Activated CD8-positive, alpha-beta T cell treated with anti-CD3 and anti-CD28 coated beads, Interleukin-2, amount 10 ng/mL, durations not matched to agents 7 days and 5 days (primary cell): ENCODE measurements at regions of chr2 and their contacts with region 1.

Region 1: GRCh38 chr2:231227309-231228162 is 29.1 kb downstream of the ARMC9 start:
- DNase-seq: peak; percentile 68
- ATAC-seq: peak; percentile 93
- H3K4me3 Mint-ChIP-seq: no peak overlapping the region
- H3K27ac Mint-ChIP-seq: no peak overlapping the region
- H3K4me1 Mint-ChIP-seq: no peaks in the 10 kb centered on the region
- H3K27me3 Mint-ChIP-seq: no peaks in the 10 kb centered on the region

Region 2: DNA sequence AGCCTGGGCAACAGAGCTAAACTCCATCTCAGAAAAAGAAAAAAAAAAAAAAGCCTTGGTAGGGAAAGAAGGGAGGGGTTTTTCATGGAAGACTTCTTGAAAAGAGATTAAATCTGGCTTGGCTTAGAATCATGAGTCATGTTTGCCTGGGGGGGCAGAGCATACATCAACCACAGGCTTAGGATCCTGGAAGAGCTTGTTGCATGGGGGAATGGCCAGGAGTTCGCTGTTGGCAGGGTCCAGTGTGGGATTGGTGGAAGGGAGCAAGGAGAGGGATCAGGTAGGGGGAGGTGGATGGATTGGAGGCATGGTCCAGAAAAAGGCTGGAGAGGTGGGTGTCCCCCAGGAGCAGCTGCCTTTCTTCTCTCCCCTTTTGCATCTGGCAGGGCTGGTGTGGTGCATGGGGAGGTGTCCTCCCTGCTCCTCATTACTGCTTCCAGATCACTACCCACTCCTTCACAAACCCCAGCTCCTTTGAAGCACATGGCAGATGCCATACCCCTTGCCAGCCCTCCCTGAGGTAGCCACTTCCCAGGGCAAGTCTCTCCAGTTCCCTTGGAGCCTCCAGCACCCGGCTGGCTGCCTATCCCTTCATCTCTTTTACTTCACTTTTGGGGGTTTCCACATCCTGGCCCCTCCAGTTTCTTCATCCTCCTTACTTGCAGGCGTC is 26.6 kb before region 1 on chr2:
- CTCF ChIA-PET with region 1: no interaction called
- POLR2A ChIA-PET with region 1: no interaction called
- DNase-seq: no peak
- ATAC-seq: no peak
- H3K4me3 Mint-ChIP-seq: no peak overlapping the region
- H3K27ac Mint-ChIP-seq: no peak overlapping the region
- H3K4me1 Mint-ChIP-seq: peaks cover 14% of the 10 kb centered on the region
- H3K27me3 Mint-ChIP-seq: peaks cover 20% of the 10 kb centered on the region

Region 3: DNA sequence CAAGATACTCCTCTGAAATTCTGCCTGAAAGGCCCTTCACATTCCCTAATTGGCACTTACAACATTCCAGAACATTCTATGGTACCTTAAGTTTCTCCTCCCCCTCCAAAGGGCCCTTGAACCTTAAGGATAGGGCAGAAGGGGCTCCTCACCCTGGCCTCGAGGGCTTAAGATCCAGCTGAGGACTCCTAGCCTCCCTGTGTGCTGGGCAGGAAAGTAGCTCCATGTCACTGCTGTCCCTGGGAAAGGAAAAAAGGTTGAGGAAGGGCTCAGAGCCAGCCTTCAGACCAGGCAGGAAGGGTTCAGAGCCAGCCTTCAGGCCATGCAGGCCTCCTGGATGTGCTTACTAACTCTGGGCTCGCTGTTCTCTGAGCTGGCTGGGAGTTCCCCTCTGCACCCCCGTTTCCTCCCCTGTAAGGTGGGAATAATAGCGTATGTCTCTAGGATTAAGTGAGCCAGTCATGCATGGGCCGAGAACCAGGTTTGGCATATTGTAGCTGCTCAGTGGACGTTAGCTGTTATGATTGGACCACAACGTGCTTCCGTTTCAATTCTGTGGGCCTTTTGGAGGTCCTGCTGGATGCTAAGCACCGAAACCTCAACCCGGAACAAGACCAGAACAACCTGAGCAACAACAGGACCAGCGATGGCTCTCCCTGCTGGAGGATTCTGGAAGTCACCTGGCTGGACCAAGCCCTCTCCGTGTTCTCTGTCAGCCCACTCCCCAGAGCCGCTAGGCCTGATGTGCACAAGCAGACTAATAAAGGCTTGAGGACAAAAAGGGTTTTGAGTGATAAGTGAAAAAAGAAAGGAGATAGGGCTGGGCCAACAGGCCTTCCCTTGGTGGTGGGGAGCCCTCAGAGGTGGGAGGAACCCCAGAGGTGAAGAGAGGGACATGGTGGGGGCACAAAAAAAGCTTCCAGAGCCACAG is 166.9 kb after region 1 on chr2:
- CTCF ChIA-PET with region 1: interaction called, 19 read pairs
- POLR2A ChIA-PET with region 1: no interaction called
- DNase-seq: no peak
- ATAC-seq: no peak
- H3K4me3 Mint-ChIP-seq: peak overlapping the region; percentile 48
- H3K27ac Mint-ChIP-seq: peak overlapping the region; percentile 95
- H3K4me1 Mint-ChIP-seq: peaks cover 38% of the 10 kb centered on the region
- H3K27me3 Mint-ChIP-seq: peaks cover 16% of the 10 kb centered on the region

Region 4: DNA sequence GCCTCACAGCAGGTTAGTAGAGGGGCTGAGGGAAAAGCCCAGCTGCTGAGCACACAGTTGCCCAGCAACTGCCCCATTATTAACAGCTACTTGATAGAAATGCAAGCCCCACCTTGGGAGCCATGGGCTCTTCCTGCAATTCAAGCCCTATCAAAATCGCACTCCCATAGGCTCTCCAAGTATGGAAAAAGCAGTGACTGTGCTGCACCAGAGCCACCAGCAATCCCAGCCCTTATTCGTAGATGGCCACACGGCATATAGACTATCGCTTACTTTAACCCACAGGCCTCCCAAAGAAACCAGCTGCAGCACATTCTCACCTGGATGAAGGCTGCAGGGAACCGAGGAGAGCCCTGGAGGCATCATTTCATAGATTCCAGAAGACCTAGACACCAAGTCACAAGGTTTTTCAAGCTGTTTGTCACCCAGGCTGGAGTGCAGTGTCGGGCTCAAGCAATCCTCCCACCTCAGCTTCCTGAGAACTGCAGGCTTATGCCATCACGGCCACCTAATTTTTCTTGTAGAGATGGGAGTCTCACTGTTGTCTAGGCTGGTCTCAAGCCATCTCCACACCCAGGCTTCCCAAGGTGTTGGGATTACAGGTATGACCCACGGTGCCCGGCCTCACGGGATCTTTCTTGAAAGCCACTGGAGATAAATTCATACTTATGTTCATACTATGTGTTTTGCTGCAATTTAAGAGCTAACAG is 225.4 kb after region 1 on chr2:
- CTCF ChIA-PET with region 1: interaction called, 34 read pairs
- POLR2A ChIA-PET with region 1: interaction called, 3 read pairs
- DNase-seq: no peak
- ATAC-seq: no peak
- H3K4me3 Mint-ChIP-seq: no peak overlapping the region
- H3K27ac Mint-ChIP-seq: peak overlapping the region; percentile 39
- H3K4me1 Mint-ChIP-seq: peaks cover 16% of the 10 kb centered on the region
- H3K27me3 Mint-ChIP-seq: no peaks in the 10 kb centered on the region